Activated CD4-positive, alpha-beta T cell treated with anti-CD3 and anti-CD28 coated beads, Interleukin-2, amount 10 ng/mL, durations not matched to agents 24 days and 14 days (primary cell): ENCODE measurements at regions of chr3 and their contacts with region 1.

Region 1: DNA sequence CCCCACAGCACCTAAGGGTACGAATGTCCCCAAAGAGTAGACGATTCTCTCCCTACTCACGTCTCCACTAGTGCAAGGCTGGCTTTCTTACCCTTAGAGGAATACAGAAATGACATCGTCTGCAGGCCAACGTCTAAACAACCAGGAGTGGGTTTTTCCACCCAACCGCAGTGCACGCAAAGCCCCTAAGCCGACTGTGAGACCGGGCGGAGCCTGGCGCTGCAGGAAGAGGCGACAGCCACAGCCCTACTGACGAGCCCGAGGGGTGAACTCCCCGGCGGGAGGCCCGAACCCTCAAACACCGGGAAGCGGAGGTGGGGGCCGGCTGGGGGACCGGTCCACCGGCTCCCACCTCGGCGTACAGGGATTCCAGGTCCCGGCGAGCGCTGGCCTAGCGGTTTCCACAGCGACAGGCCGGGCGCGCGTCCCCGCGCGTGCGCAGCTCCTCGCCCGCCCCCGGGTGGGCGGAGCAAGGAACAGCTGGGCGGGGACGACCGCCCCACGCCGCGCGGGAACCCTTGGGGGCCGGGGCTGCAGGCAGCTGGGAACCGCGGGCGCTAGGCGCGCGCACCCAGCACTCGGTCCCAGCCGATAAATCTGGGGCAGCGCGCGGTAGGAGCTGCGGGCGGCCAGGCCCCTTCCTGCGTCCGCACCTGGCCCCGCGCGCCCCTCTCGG is at the starts of genes CEP19 and PIGX:
- DNase-seq: peak; percentile 97
- H3K4me3 Mint-ChIP-seq: peak within 1 kb of the TSS; percentile 88
- H3K27ac Mint-ChIP-seq: peak within 1 kb of the TSS; percentile 97
- H3K4me1 Mint-ChIP-seq: peaks cover 32% of the 10 kb centered on the region
- H3K27me3 Mint-ChIP-seq: no peaks in the 10 kb centered on the region
- total RNA-seq, gene CEP19: 3.9 and 4.0 TPM in 2 replicates
- total RNA-seq, gene PIGX: 54.3 and 54.5 TPM in 2 replicates

Region 2: GRCh38 chr3:196639483-196640296 is 72.3 kb before region 1 on chr3 and contains the start of gene NRROS:
- intact Hi-C with region 1: loop called (anchors 2 kb)
- DNase-seq: peak; percentile 89
- H3K4me3 Mint-ChIP-seq: peak within 1 kb of the TSS; percentile 86
- H3K27ac Mint-ChIP-seq: peak within 1 kb of the TSS; percentile 94
- H3K4me1 Mint-ChIP-seq: peaks cover 53% of the 10 kb centered on the region
- H3K27me3 Mint-ChIP-seq: no peaks in the 10 kb centered on the region
- total RNA-seq, gene NRROS: 38.2 and 39.0 TPM in 2 replicates

Region 3: GRCh38 chr3:196726788-196727675 is 15.1 kb after region 1 on chr3:
- intact Hi-C with region 1: loop called (anchors 1 kb)
- DNase-seq: peak; percentile 67
- H3K4me3 Mint-ChIP-seq: peak overlapping the region; percentile 39
- H3K27ac Mint-ChIP-seq: peak overlapping the region; percentile 79
- H3K4me1 Mint-ChIP-seq: peaks cover 25% of the 10 kb centered on the region
- H3K27me3 Mint-ChIP-seq: no peaks in the 10 kb centered on the region

Region 4: DNA sequence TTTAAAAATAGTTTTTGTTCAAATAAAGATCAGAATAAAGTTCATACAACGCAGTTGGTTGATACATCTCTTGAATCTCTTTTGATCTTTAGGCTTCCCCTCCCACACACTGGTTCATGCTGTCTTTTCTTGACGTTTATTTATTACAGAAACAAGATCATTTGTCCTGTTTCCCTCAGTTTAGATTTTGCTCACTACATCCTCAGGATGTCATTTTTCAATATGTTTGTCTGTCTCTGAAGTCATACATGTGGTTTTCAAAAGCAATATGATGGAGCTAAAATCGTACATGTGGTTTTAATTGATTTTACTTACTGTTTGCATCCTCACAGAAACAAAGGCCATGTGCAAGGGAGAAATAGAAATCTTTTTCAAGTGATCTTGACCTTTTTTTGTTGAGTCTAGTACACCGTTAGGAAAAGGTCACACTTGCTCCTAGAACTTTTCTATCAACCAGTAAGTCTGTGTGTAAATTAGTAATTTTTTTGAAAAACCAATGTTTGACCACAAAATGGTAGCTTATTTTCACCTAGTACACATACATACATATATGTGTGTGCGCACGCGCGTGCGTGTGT is 92.0 kb after region 1 on chr3:
- intact Hi-C with region 1: loop called (anchors 5 kb)
- DNase-seq: no peak
- H3K4me3 Mint-ChIP-seq: peak overlapping the region; percentile 20
- H3K27ac Mint-ChIP-seq: peak overlapping the region; percentile 84
- H3K4me1 Mint-ChIP-seq: peaks cover 14% of the 10 kb centered on the region
- H3K27me3 Mint-ChIP-seq: no peaks in the 10 kb centered on the region

Region 5: GRCh38 chr3:196969660-196970546 is 257.9 kb after region 1 on chr3:
- intact Hi-C with region 1: loop called (anchors 1 kb)
- DNase-seq: peak; percentile 94
- H3K4me3 Mint-ChIP-seq: peak overlapping the region; percentile 71
- H3K27ac Mint-ChIP-seq: peak overlapping the region; percentile 75
- H3K4me1 Mint-ChIP-seq: peaks cover 17% of the 10 kb centered on the region
- H3K27me3 Mint-ChIP-seq: peaks cover 10% of the 10 kb centered on the region

Region 6: DNA sequence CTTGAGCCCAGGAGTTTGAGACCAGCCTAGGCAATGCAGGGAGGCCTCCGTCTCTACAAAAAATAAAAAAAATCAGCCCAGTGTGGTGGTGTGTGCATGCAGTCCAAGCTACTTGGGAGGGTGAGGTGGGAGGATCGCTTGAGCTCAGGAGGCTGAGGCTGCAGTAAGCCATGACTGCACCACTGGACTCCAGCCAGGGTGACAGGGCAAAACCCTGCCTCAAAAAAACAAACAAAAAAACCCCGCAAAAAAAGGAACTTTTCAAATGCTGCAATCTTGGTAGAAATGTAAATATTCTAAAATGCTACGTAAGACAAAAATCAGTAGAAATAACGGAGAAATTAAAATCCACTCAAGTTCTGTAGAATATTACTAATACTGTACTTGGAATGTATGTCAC is 425.8 kb after region 1 on chr3:
- intact Hi-C with region 1: no loop called
- DNase-seq: no peak
- H3K4me3 Mint-ChIP-seq: no peak overlapping the region
- H3K27ac Mint-ChIP-seq: no peak overlapping the region
- H3K4me1 Mint-ChIP-seq: peaks cover 4% of the 10 kb centered on the region
- H3K27me3 Mint-ChIP-seq: no peaks in the 10 kb centered on the region